Heart right ventricle (tissue), 16 donors: ENCODE measurements at regions of chr13 and their contacts with region 1.

Region 1: GRCh38 chr13:19863323-19864023 is at the start of gene ZMYM5:
- DNase-seq: peak; percentile 99
- ATAC-seq: peak; percentile 95 to 98 (median 98)
- H3K4me3 ChIP-seq: peak within 1 kb of the TSS; percentile 79 to 96 (median 85)
- H3K27ac ChIP-seq: peak within 1 kb of the TSS; percentile 94 to 100 (median 99)
- H3K4me1 ChIP-seq: peaks cover 0 to 28% (median 23%) of the 10 kb centered on the region in 9 donors
- H3K27me3 ChIP-seq: no peaks in the 10 kb centered on the region
- CTCF ChIP-seq: peak in 1 of 9 donors; percentile 10
- total RNA-seq, gene ZMYM5: 6.5 to 9.3 (median 8.0) TPM

Region 2: GRCh38 chr13:19633479-19634255 is 229.8 kb before region 1 on chr13 and contains the start of gene MPHOSPH8:
- intact Hi-C with region 1: loop called in 6 of 10 experiments (anchors 5 to 10 kb)
- DNase-seq: peak; percentile 93 to 97
- ATAC-seq: peak; percentile 98 to 100 (median 99)
- H3K4me3 ChIP-seq: peak within 1 kb of the TSS; percentile 55 to 97 (median 84)
- H3K27ac ChIP-seq: peak within 1 kb of the TSS; percentile 85 to 97 (median 93)
- H3K4me1 ChIP-seq: peaks cover 2 to 45% (median 30%) of the 10 kb centered on the region in 9 donors
- H3K27me3 ChIP-seq: no peaks in the 10 kb centered on the region
- CTCF ChIP-seq: no peak
- total RNA-seq, gene MPHOSPH8: 20.4 to 35.4 (median 31.0) TPM

Region 3: GRCh38 chr13:19782049-19782726 is 81.3 kb before region 1 on chr13:
- intact Hi-C with region 1: loop called in 8 of 10 experiments (anchors 2 to 10 kb)
- DNase-seq: peak; percentile 49 to 60
- ATAC-seq: peak; percentile 67 to 79 (median 74)
- H3K4me3 ChIP-seq: peak overlapping the region; percentile 89 to 100 (median 95)
- H3K27ac ChIP-seq: peak overlapping the region; percentile 77 to 98 (median 96)
- H3K4me1 ChIP-seq: peaks cover 0 to 14% (median 10%) of the 10 kb centered on the region in 9 donors
- H3K27me3 ChIP-seq: no peaks in the 10 kb centered on the region
- CTCF ChIP-seq: no peak

Region 4: GRCh38 chr13:19959831-19960652 is 96.6 kb after region 1 on chr13:
- intact Hi-C with region 1: loop called in 7 of 10 experiments (anchors 1 to 5 kb)
- DNase-seq: peak; percentile 78 to 85
- ATAC-seq: peak; percentile 34 to 73 (median 58)
- H3K4me3 ChIP-seq: peak overlapping the region; percentile 63 to 93 (median 88)
- H3K27ac ChIP-seq: peak overlapping the region; percentile 89 to 100 (median 98)
- H3K4me1 ChIP-seq: peaks cover 2 to 55% (median 38%) of the 10 kb centered on the region in 9 donors
- H3K27me3 ChIP-seq: no peaks in the 10 kb centered on the region
- CTCF ChIP-seq: peak; percentile 77 to 97 (median 87)